Natural killer cell (primary cell): ENCODE measurements at regions of chr1 and their contacts with region 1.

Region 1: GRCh38 chr1:235259133-235259778 is 68.7 kb downstream of the ARID4B start:
- DNase-seq: peak in 1 of 2 donors; percentile 40
- ATAC-seq: peak; percentile 54 to 70 (median 67)
- H3K4me3 ChIP-seq: no peak overlapping the region
- H3K4me3 Mint-ChIP-seq: peak overlapping the region; percentile 37
- H3K27ac ChIP-seq: peak overlapping the region; percentile 49
- H3K27ac Mint-ChIP-seq: peak overlapping the region; percentile 47 to 68
- H3K4me1 ChIP-seq: peaks cover 23% of the 10 kb centered on the region
- H3K4me1 Mint-ChIP-seq: peaks cover 62 to 65% of the 10 kb centered on the region in 2 donors
- H3K27me3 ChIP-seq: no peaks in the 10 kb centered on the region
- H3K27me3 Mint-ChIP-seq: no peaks in the 10 kb centered on the region
- CTCF ChIP-seq: peak; percentile 14

Region 2: GRCh38 chr1:235286667-235287066 is 27.4 kb after region 1 on chr1:
- intact Hi-C with region 1: loop called (anchors 5 kb)
- DNase-seq: no peak
- ATAC-seq: peak in 2 of 3 donors; percentile 25 to 37
- H3K4me3 ChIP-seq: no peak overlapping the region
- H3K4me3 Mint-ChIP-seq: peak overlapping the region; percentile 11
- H3K27ac ChIP-seq: no peak overlapping the region
- H3K27ac Mint-ChIP-seq: peak overlapping the region; percentile 67 to 72
- H3K4me1 ChIP-seq: peaks cover 39% of the 10 kb centered on the region
- H3K4me1 Mint-ChIP-seq: peaks cover 63 to 71% of the 10 kb centered on the region in 2 donors
- H3K27me3 ChIP-seq: no peaks in the 10 kb centered on the region
- H3K27me3 Mint-ChIP-seq: no peaks in the 10 kb centered on the region
- CTCF ChIP-seq: no peak